HEK293T (cell line): ENCODE measurements at regions of chr11 and their contacts with region 1.

Region 1: GRCh38 chr11:65558002-65558931 is at the start of gene LTBP3:
- DNase-seq: peak; percentile 67

Region 2: DNA sequence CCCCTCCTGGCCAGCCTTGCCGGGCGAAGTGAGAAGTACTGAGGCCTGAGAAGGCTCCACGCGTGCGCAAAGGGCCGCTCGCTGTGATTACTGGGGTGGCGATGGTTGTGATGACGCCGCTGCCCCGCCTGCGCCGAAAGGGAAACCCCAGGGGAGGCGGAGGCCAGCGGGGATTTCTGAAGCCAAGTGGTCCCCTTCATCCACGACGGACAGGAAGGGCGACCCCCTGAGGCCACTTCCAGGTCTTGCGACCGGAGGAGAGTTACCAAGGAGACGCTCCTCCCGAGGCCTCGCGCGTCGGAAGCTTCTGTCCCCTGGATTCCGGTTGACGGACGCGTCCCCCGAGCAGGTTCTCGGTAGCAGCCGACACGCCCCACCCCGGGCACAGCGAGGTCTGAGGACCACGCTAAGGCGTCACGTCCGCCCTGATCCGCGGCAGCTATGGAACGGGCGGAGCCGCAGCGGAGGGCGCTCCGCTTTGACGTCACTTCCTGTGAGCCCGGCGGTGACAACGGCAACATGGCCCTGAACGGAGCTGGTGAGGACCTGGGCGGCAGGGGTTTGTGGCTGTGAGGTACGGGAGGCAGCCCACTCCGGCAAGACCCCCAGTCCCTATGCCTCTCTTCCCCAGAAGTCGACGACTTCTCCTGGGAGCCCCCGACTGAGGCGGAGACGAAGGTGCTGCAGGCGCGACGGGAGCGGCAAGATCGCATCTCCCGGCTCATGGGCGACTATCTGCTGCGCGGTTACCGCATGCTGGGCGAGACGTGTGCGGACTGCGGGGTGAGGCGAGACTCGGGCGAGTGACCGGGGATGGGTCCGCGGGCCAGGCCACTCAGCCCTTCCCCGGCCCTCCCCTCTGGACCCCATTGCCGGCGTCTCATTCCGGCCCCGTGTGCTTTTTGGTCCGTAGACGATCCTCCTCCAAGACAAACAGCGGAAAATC is 12.0 kb after region 1 on chr11 and contains the start of gene ZNRD2:
- CTCF ChIA-PET with region 1: interaction called, 12 read pairs
- POLR2A ChIA-PET with region 1: interaction called, 47 read pairs
- DNase-seq: peak; percentile 96